ENCODE measurements at regions of chr14 and their contacts with region 1.

Region 1: GRCh38 chr14:69574263-69574953 is at the start of gene CCDC177:
- DNase-seq: peak; percentile 63
- H3K4me3 Mint-ChIP-seq: peak within 1 kb of the TSS; percentile 54
- H3K27ac Mint-ChIP-seq: no peak within 1 kb of the TSS
- H3K4me1 Mint-ChIP-seq: peaks cover 6% of the 10 kb centered on the region
- H3K27me3 Mint-ChIP-seq: peaks cover 36% of the 10 kb centered on the region
- CTCF ChIP-seq: peak; percentile 83
- total RNA-seq, gene CCDC177: not detected in 2 replicates

Region 2: GRCh38 chr14:69242311-69243224 is 331.8 kb before region 1 on chr14:
- CTCF ChIA-PET with region 1: interaction called, 8 read pairs
- POLR2A ChIA-PET with region 1: no interaction called
- intact Hi-C with region 1: loop called (anchors 2 kb)
- DNase-seq: peak; percentile 62
- H3K4me3 Mint-ChIP-seq: no peak overlapping the region
- H3K27ac Mint-ChIP-seq: no peak overlapping the region
- H3K4me1 Mint-ChIP-seq: no peaks in the 10 kb centered on the region
- H3K27me3 Mint-ChIP-seq: no peaks in the 10 kb centered on the region
- CTCF ChIP-seq: peak; percentile 63

Region 3: DNA sequence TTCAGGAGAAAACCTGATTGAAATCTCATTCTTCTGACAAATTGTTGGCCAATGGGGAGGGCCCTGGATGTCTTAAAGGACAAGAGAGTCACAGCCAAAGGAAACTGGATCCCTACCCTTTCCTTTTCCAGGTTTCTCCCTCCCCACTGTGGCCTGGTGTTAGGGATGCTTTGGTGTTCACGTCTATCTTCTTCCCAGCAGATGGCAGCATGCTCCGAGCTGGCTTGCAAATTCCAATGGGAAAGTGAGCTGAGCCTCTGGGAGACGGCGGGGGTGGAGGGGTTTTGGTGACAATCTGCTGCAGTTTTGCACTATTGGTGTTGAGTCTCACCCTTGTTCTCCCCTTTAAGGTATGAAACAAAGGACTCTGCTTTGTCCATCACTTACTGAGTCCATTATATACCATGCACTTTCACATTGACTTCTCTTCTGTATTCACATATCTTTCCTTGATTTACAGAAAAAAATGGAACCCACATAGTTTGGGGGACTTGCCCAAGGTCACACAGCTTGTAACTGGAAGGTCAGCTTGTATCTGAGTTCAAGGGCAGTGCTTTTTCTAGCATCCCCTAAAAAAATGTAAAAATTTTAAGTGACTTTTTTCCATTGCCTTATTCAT is 39.1 kb before region 1 on chr14:
- CTCF ChIA-PET with region 1: interaction called, 113 read pairs
- POLR2A ChIA-PET with region 1: interaction called, 9 read pairs
- intact Hi-C with region 1: loop called (anchors 1 kb)
- DNase-seq: peak; percentile 72
- H3K4me3 Mint-ChIP-seq: no peak overlapping the region
- H3K27ac Mint-ChIP-seq: no peak overlapping the region
- H3K4me1 Mint-ChIP-seq: no peaks in the 10 kb centered on the region
- H3K27me3 Mint-ChIP-seq: peaks cover 18% of the 10 kb centered on the region
- CTCF ChIP-seq: peak; percentile 69

Region 4: DNA sequence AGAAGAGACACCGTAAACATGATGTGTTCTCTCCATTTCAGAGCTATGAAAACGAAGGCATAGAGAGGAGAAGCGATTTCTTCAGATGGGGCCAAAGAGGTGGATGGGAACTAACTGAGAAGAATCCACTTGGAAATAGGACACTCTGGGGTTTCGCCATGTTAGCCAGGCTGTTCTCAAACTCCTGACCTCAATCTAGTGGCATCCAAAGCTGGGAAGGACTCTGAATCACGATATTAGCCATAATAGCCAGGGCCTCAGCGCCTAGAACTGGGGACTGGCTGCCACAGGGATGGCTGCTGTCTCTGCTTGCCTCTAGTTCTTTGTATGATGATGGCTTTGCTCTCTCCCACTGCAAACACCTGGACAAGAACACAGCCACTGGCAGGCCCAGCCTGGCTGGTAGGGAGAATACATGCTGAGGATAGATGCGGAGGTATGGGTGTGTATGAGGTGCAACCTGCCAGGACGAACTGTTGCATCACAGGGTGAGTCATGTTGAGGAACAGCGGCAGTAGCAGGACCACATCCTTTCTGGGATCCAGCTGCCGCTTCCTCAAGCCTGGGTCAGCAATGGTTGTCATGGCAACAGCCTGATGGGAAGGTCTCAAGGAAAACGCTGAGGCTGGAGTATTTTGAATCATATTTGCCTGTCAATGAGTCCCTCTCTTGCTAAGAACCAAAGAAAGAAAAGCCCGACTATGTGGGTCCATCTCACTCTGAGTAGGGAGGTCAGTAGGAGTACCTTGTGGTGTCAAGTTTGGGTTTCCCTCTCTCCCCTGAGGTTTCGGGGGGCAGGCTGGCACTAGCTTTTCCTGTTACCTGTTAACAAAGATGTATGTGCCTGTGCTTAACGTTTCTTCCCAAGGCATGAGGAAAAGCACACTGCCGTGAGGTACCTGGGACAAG is 30.8 kb before region 1 on chr14:
- CTCF ChIA-PET with region 1: interaction called, 113 read pairs
- POLR2A ChIA-PET with region 1: no interaction called
- intact Hi-C with region 1: no loop called
- DNase-seq: peak; percentile 98
- H3K4me3 Mint-ChIP-seq: no peak overlapping the region
- H3K27ac Mint-ChIP-seq: no peak overlapping the region
- H3K4me1 Mint-ChIP-seq: peaks cover 11% of the 10 kb centered on the region
- H3K27me3 Mint-ChIP-seq: no peaks in the 10 kb centered on the region
- CTCF ChIP-seq: no peak

Region 5: DNA sequence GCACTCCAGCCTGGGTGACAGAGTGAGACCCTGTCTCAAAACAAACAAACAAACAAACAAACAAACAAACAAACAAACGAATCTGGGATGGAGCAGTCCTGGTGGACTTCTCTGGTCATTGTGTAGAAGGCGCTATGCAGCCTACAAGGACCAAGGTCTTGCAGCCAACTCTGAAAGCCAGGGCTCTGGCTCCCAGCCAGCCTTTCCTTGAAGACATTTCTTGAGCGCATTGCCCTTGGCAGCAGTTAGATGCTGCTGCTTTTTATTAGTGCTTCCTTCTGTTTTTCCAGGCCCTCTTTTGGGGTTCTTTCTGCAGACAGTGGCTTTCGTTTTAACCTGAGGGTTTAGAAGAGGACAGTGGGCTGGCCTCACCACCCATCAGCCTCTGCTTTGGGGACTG is 19.9 kb before region 1 on chr14:
- CTCF ChIA-PET with region 1: interaction called, 14 read pairs
- POLR2A ChIA-PET with region 1: interaction called, 3 read pairs
- intact Hi-C with region 1: no loop called
- DNase-seq: peak; percentile 14
- H3K4me3 Mint-ChIP-seq: no peak overlapping the region
- H3K27ac Mint-ChIP-seq: no peak overlapping the region
- H3K4me1 Mint-ChIP-seq: peaks cover 13% of the 10 kb centered on the region
- H3K27me3 Mint-ChIP-seq: peaks cover 14% of the 10 kb centered on the region
- CTCF ChIP-seq: no peak

Region 6: DNA sequence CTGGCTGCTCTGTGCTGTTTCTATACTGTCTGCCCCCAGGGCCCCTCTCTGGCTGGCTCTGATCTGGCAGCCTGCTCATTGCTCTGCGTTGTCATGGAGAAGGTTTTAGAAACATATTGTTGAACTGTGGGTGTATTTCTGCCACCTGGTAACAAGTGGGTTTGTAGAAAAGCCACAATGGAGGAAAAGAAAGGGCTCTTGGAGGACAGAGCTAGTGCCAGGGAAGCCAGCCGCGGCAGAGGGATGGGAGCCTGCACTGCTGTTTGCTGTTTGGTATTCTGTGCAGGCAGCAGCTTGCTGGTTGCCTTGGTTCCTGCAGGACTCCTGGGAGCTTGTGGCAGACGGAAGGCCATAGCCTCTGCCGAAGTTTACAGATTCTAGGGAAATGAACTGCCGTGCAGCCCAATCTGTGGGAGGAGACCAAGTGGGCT is 14.8 kb before region 1 on chr14:
- CTCF ChIA-PET with region 1: interaction called, 14 read pairs
- POLR2A ChIA-PET with region 1: interaction called, 3 read pairs
- intact Hi-C with region 1: no loop called
- DNase-seq: no peak
- H3K4me3 Mint-ChIP-seq: no peak overlapping the region
- H3K27ac Mint-ChIP-seq: no peak overlapping the region
- H3K4me1 Mint-ChIP-seq: no peaks in the 10 kb centered on the region
- H3K27me3 Mint-ChIP-seq: peaks cover 60% of the 10 kb centered on the region
- CTCF ChIP-seq: no peak

Measured in MCF 10A (cell line).